Endothelial cell of umbilical vein (primary cell): ENCODE measurements at regions of chr1 and their contacts with region 1.

Region 1: DNA sequence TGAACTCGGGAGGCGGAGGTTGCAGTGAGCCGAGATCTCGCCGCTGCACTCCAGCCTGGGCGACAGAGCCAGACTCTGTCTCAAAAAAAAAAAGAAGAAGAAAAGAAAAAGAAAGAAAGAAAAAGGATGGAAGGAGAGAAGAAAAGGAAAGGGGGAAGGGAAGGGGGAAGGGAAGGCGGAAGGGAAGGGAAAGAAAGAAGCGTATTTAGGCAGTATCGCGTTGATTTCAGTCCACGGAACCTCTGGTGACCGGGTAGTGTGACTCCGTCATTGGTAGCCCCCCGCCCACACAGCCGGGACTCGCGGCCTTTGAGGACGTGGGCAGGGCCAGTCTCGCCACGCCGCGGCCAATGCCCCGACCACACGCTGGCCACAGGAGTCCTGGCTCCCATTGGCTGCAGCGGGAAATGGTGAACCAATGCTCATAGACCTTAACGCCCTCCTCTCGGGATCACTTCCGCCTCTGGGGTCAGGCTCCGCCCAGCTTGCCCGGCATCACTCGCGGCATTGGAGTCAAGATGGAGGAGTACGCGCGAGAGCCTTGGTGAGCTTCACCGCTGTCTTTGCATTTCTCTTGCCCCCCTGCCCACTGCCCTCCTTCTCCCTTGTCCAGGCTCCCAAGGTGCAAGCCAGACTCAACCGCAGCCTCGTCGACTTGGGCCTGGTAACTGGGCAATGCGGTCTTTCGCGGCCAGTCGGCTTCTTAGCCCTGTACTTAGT is at the start of gene TIMM17A:
- DNase-seq: peak; percentile 99
- H3K4me3 ChIP-seq: peak within 1 kb of the TSS; percentile 26 to 87 (median 68)
- H3K27ac ChIP-seq: peak within 1 kb of the TSS; percentile 71
- H3K4me1 ChIP-seq: peaks cover 10% of the 10 kb centered on the region
- H3K27me3 ChIP-seq: no peaks in the 10 kb centered on the region
- CTCF ChIP-seq: no peak
- POLR2A ChIP-seq: peak; percentile 97
- total RNA-seq, gene TIMM17A: 93.7 and 105 TPM in 2 replicates

Region 2: GRCh38 chr1:201916649-201917249 is 38.4 kb before region 1 on chr1:
- CTCF ChIA-PET with region 1: no interaction called
- POLR2A ChIA-PET with region 1: interaction called, 4 read pairs
- dilution Hi-C with region 1: no loop called
- intact Hi-C with region 1: loop called (anchors 1 kb)
- DNase-seq: peak; percentile 97
- H3K4me3 ChIP-seq: no peak overlapping the region
- H3K27ac ChIP-seq: peak overlapping the region; percentile 35
- H3K4me1 ChIP-seq: peaks cover 19% of the 10 kb centered on the region
- H3K27me3 ChIP-seq: no peaks in the 10 kb centered on the region
- CTCF ChIP-seq: no peak
- POLR2A ChIP-seq: peak; percentile 50